ENCODE measurements at regions of chr20 and their contacts with region 1.

Region 1: GRCh38 chr20:23420943-23421931 is at the start of gene NAPB:
- DNase-seq: peak; percentile 96
- ATAC-seq: peak; percentile 99
- H3K4me3 Mint-ChIP-seq: peak within 1 kb of the TSS; percentile 97
- H3K27ac Mint-ChIP-seq: peak within 1 kb of the TSS; percentile 96
- H3K4me1 Mint-ChIP-seq: peaks cover 53% of the 10 kb centered on the region
- H3K27me3 Mint-ChIP-seq: peaks cover 10% of the 10 kb centered on the region
- total RNA-seq, gene NAPB: 17.5 to 23.1 TPM

Region 2: GRCh38 chr20:23350196-23350903 is 70.9 kb before region 1 on chr20 and contains the start of gene NXT1:
- CTCF ChIA-PET with region 1: interaction called, 47 read pairs
- DNase-seq: peak; percentile 97
- ATAC-seq: peak; percentile 87
- H3K4me3 Mint-ChIP-seq: peak within 1 kb of the TSS; percentile 82
- H3K27ac Mint-ChIP-seq: peak within 1 kb of the TSS; percentile 99
- H3K4me1 Mint-ChIP-seq: peaks cover 42% of the 10 kb centered on the region
- H3K27me3 Mint-ChIP-seq: no peaks in the 10 kb centered on the region
- total RNA-seq, gene NXT1: 34.0 to 48.3 TPM

Region 3: DNA sequence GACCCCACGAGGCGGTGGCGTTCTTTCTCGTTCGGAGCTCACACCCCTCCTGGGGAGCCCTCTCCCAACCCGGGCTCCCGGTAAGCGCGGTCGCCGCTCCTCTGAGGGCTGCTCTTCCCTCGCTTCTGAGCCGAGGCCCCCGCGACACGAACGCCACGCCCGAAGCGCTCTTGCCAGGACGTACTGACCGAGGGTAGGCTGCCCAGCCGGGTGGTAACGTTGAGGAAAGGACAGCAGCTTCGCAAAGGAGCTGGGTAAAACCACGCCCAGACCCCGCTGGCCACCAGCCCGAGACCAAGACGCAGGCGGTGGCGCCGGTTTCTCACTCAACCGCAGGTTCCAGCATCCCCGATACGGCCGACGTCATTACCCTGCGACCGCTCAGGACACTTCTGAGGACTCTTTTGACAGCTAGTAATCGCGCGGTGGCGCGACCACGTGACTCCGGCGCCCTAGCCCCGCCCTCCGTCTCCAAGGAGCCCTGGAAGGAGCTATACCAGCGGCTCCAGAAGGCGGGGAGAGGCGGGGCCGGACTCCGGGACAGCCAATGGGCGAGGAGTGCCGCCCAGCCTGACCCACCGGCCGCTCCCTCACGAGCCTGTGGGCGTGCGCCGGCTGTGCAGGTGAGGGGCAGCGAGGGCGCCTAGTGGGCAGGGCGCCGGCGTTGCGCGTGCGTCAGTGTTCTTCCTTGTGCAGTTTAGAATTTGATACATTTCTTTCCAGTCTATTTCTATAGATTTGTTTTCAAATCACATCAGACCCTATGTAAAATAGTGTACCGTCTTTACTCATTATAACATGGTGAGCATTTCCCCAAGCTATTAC is 63.3 kb before region 1 on chr20:
- CTCF ChIA-PET with region 1: interaction called, 47 read pairs
- DNase-seq: peak; percentile 100
- ATAC-seq: peak; percentile 83
- H3K4me3 Mint-ChIP-seq: peak overlapping the region; percentile 92
- H3K27ac Mint-ChIP-seq: peak overlapping the region; percentile 98
- H3K4me1 Mint-ChIP-seq: peaks cover 36% of the 10 kb centered on the region
- H3K27me3 Mint-ChIP-seq: no peaks in the 10 kb centered on the region

Region 4: GRCh38 chr20:23441850-23442313 is 20.6 kb after region 1 on chr20:
- CTCF ChIA-PET with region 1: interaction called, 28 read pairs
- DNase-seq: peak; percentile 78
- ATAC-seq: peak; percentile 85
- H3K4me3 Mint-ChIP-seq: no peak overlapping the region
- H3K27ac Mint-ChIP-seq: no peak overlapping the region
- H3K4me1 Mint-ChIP-seq: no peaks in the 10 kb centered on the region
- H3K27me3 Mint-ChIP-seq: no peaks in the 10 kb centered on the region

Region 5: GRCh38 chr20:23456409-23456808 is 35.2 kb after region 1 on chr20:
- CTCF ChIA-PET with region 1: no interaction called
- DNase-seq: peak; percentile 59
- ATAC-seq: peak; percentile 78
- H3K4me3 Mint-ChIP-seq: no peak overlapping the region
- H3K27ac Mint-ChIP-seq: peak overlapping the region; percentile 58
- H3K4me1 Mint-ChIP-seq: peaks cover 22% of the 10 kb centered on the region
- H3K27me3 Mint-ChIP-seq: peaks cover 8% of the 10 kb centered on the region

Region 6: GRCh38 chr20:23492292-23492691 is 71.1 kb after region 1 on chr20:
- CTCF ChIA-PET with region 1: no interaction called
- DNase-seq: no peak
- ATAC-seq: no peak
- H3K4me3 Mint-ChIP-seq: no peak overlapping the region
- H3K27ac Mint-ChIP-seq: no peak overlapping the region
- H3K4me1 Mint-ChIP-seq: no peaks in the 10 kb centered on the region
- H3K27me3 Mint-ChIP-seq: no peaks in the 10 kb centered on the region